CD8-positive, alpha-beta T cell (primary cell): ENCODE measurements at regions of chr12 and their contacts with region 1.

Region 1: DNA sequence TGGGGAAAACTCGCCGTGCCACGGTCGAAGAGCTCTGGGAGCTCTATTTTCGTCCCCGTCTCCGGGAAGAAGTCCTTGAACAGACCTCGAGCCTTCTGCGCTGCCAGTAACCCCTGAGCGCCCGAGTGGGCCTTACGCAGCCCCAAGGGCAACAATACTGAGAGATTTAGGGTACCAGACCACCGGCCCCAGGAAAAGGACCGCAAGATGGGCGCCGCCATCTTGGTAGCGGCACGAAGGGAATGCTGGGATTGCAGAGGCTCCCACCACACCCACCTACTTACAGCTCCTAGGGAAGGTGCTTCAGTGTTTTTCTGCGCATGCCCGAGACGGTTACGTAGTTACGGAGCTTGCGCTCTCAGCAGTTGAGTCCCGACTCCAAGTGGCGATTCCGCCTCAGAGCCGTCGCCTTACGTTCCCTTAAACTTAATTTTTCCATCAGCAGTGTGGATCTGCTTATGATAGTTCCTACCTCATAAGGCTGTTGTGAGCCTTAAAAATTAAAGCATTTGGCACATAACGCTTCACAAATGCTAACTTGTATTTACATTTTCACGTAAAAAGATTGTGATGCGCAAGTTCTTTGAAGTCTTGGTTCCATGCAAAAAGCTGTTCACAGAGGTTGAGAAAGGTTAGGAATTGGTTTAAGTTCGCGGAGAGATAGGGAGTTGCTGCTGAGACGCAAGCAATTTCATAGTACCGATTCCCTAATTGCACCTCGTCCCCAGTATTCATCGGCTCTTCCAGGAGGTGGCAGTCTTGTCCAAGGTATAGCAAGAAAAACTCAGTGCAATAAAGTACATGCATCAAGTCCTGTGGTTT is at the start of gene YARS2:
- DNase-seq: peak; percentile 64 to 97 (median 88)
- ATAC-seq: peak; percentile 87
- H3K4me3 ChIP-seq: peak within 1 kb of the TSS; percentile 80 to 99
- H3K4me3 Mint-ChIP-seq: peak within 1 kb of the TSS; percentile 88
- H3K27ac ChIP-seq: peak within 1 kb of the TSS; percentile 84 to 95
- H3K27ac Mint-ChIP-seq: peak within 1 kb of the TSS; percentile 94
- H3K4me1 ChIP-seq: peaks cover 15% of the 10 kb centered on the region
- H3K4me1 Mint-ChIP-seq: peaks cover 21% of the 10 kb centered on the region
- H3K27me3 ChIP-seq: no peaks in the 10 kb centered on the region
- H3K27me3 Mint-ChIP-seq: no peaks in the 10 kb centered on the region
- CTCF ChIP-seq: peak; percentile 94
- total RNA-seq, gene YARS2: 12.9 to 13.3 TPM

Region 2: GRCh38 chr12:31325877-31326631 is 1429.8 kb before region 1 on chr12 and contains the start of gene SINHCAF:
- CTCF ChIA-PET with region 1: no interaction called
- POLR2A ChIA-PET with region 1: interaction called, 6 read pairs
- intact Hi-C with region 1: loop called (anchors 1 to 10 kb)
- DNase-seq: peak; percentile 94 to 99 (median 99)
- ATAC-seq: peak; percentile 55
- H3K4me3 ChIP-seq: peak within 1 kb of the TSS; percentile 81 to 97
- H3K4me3 Mint-ChIP-seq: peak within 1 kb of the TSS; percentile 92
- H3K27ac ChIP-seq: peak within 1 kb of the TSS; percentile 92 to 96
- H3K27ac Mint-ChIP-seq: peak within 1 kb of the TSS; percentile 93
- H3K4me1 ChIP-seq: peaks cover 22% of the 10 kb centered on the region
- H3K4me1 Mint-ChIP-seq: peaks cover 31% of the 10 kb centered on the region
- H3K27me3 ChIP-seq: no peaks in the 10 kb centered on the region
- H3K27me3 Mint-ChIP-seq: no peaks in the 10 kb centered on the region
- CTCF ChIP-seq: no peak
- total RNA-seq, gene SINHCAF: 93.7 to 108 TPM

Region 3: DNA sequence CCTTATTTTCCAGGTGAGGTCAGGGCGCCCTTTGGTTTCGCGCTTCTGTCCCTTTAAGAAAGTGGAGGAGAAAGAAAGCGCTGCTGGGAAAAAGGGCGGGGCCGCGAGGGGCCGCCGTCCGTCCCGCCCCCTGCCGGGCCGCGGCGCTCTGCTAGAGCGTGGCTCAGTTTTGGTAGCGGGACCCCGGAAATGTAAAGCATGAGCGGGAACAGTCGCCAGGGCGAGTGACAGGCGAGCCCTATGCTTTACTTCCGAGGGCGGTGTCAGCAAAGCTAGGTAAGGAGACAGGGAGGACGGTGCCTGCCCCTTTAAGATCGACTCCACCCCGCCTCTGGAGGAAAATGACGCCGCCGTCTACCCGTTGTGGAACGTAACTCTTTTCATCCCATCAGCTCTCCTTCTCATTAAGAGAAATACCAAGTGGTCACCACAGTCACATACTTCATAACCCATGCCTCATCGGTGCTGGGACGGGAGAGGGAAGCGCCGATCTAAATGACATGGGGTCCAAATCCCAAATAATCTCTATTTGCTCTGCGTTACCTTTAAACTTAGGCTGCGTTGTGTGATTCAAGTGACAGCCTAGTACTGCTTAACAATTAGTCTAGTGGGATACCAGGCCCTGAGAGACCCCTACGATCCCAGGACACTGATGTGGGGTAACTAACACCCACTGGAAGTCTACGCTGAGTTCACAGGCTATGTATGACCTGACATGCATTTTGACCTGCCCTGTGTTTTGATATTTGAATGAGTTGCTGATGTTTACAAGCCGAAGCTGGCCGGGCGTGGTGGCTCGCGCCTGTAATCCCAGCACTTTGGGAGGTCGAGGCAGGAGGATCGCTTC is 1096.6 kb before region 1 on chr12 and contains the start of gene ETFBKMT:
- CTCF ChIA-PET with region 1: interaction called, 14 read pairs
- POLR2A ChIA-PET with region 1: no interaction called
- intact Hi-C with region 1: loop called (anchors 1 to 5 kb)
- DNase-seq: peak; percentile 84 to 97 (median 92)
- ATAC-seq: peak; percentile 99
- H3K4me3 ChIP-seq: peak within 1 kb of the TSS; percentile 82 to 87
- H3K4me3 Mint-ChIP-seq: peak within 1 kb of the TSS; percentile 98
- H3K27ac ChIP-seq: peak within 1 kb of the TSS; percentile 89 to 92
- H3K27ac Mint-ChIP-seq: peak within 1 kb of the TSS; percentile 100
- H3K4me1 ChIP-seq: peaks cover 11% of the 10 kb centered on the region
- H3K4me1 Mint-ChIP-seq: peaks cover 14% of the 10 kb centered on the region
- H3K27me3 ChIP-seq: no peaks in the 10 kb centered on the region
- H3K27me3 Mint-ChIP-seq: no peaks in the 10 kb centered on the region
- CTCF ChIP-seq: peak; percentile 22
- total RNA-seq, gene ETFBKMT: 0.41 to 1.0 TPM

Region 4: DNA sequence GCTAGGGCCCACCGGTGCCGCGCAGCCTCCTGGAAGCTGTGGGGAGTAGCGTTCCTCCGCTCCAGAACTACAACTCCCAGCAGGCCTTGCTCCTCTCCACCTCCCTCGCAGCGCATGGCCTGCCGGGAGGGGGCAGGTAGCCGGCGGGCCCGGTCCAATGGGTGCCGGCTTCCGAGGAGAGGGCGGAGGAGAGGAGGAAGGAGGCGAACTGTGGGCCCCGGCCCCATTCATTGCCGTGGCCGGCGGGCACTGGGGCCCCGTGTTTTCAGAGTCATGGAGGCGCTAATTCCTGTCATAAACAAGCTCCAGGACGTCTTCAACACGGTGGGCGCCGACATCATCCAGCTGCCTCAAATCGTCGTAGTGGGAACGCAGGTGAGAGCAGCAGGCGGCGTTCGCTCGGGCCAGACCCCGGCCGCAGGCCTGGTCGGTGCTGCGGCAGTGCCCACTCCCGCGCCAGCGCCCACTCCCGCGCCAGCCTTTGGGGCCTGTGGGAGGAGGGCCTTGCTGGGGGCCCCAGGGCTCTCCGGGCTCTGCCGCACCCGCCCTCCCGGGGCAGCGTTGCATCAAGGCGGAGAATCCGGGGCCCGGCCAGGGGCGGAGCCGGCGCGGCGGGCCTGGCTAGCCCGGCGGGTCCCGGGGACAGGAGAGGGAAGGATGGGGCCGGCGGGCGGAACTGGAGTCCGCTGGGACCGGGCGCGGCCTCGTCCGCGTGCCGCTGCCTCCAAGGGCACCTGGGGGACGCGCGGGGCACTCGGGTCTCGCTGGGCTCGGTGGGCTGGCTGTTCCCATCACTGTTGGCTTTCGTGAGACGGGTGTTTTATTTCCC is 76.6 kb before region 1 on chr12 and contains the start of gene DNM1L:
- CTCF ChIA-PET with region 1: no interaction called
- POLR2A ChIA-PET with region 1: interaction called, 6 read pairs
- intact Hi-C with region 1: loop called (anchors 1 to 2 kb)
- DNase-seq: peak; percentile 85 to 96 (median 93)
- ATAC-seq: peak; percentile 98
- H3K4me3 ChIP-seq: peak within 1 kb of the TSS; percentile 62 to 76
- H3K4me3 Mint-ChIP-seq: peak within 1 kb of the TSS; percentile 94
- H3K27ac ChIP-seq: peak within 1 kb of the TSS; percentile 71 to 87
- H3K27ac Mint-ChIP-seq: peak within 1 kb of the TSS; percentile 90
- H3K4me1 ChIP-seq: peaks cover 11% of the 10 kb centered on the region
- H3K4me1 Mint-ChIP-seq: peaks cover 30% of the 10 kb centered on the region
- H3K27me3 ChIP-seq: no peaks in the 10 kb centered on the region
- H3K27me3 Mint-ChIP-seq: no peaks in the 10 kb centered on the region
- CTCF ChIP-seq: no peak
- total RNA-seq, gene DNM1L: 76.1 to 77.1 TPM

Region 5: DNA sequence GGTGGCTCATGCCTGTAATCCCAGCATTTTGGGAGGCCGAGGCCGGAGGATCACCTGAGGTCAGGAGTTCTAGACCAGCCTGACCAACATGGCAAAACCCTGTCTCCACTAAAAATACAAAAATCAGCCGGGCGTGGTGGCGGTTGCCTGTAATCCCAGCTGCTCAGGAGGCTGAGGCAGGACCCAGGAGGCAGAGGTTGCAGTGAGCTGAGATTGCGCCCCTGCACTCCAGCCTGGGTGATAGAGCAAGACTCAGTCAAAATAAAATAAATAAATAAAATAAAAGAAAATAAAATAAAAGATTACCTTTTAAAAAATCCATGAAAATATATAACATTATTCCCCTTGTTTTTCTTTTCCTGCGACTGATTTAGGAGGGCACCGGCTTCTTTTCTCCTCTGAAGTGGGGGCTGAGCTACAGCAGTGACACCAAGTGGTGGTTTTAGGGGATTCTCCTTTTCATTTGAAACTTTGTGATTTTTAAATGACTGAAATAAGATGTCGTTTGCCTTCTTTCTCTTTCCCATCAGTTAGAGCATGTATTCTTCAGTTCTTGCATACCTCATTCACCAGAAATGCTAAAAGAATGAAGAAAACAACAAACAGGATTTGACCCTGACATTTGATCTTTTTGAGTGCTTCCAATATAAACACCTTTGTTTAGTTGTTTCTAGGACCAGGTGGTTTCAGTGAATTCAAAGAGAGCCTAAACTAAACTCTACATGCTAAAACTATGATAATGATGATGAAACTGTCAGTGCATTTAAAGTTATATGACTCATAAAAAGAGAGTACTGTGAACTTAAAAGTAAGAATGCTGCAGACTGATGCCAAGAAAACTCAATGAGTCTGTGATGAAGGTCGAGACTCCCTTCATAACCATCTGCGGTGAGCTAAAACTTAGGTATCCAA is 163.3 kb after region 1 on chr12:
- CTCF ChIA-PET with region 1: no interaction called
- POLR2A ChIA-PET with region 1: no interaction called
- intact Hi-C with region 1: loop called in 1 of 2 experiments (anchors 2 kb)
- DNase-seq: peak in 2 of 9 experiments; percentile 4 to 10
- ATAC-seq: no peak
- H3K4me3 ChIP-seq: no peak overlapping the region
- H3K4me3 Mint-ChIP-seq: no peak overlapping the region
- H3K27ac ChIP-seq: no peak overlapping the region
- H3K27ac Mint-ChIP-seq: no peak overlapping the region
- H3K4me1 ChIP-seq: no peaks in the 10 kb centered on the region
- H3K4me1 Mint-ChIP-seq: no peaks in the 10 kb centered on the region
- H3K27me3 ChIP-seq: no peaks in the 10 kb centered on the region
- H3K27me3 Mint-ChIP-seq: peaks cover 11% of the 10 kb centered on the region
- CTCF ChIP-seq: no peak

Region 6: DNA sequence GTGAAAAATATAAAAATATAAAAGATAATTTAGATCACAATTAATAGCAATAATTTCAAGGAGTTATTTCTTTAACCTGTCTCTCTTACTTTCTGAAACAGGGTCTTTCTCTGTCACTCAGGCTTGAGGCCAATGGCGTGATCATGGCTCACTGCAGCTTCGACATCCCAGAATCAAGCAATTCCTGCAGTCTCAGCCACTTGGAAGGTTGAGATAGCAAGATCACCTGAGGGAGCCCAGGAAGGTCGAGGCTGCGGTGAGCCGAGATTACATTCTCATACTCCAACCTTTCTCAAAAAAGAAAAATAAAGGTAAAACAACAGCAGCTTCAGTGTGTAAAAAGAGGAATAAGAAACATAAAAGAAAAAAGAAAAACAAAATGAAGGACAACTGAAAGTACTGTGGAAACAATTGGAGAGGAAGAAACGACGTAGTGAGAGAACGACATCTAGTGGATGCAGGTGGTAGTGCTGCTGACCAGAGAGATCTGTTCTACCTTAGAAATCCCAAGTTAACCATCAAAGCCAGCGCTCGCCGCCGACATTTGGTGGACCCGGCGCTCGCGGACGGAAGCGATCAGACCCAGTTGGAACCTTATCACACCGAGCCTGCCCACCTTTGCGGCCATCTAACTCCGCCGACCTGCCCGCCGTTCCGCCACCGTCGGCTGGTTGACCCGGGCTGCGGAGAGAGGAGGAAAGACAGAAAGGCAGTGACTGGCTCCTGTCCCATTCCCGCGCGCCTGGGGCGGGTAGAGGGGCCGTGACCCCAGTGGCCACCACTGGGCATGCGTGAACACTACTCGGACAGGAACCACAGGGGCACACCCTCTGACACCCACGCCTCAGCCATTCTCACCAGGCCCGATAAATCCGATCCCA is 1462.5 kb after region 1 on chr12:
- CTCF ChIA-PET with region 1: interaction called, 3 read pairs
- POLR2A ChIA-PET with region 1: no interaction called
- intact Hi-C with region 1: loop called in 1 of 2 experiments (anchors 1 kb)
- DNase-seq: peak; percentile 41 to 78 (median 62)
- ATAC-seq: peak; percentile 75
- H3K4me3 ChIP-seq: peak overlapping the region; percentile 48 to 56
- H3K4me3 Mint-ChIP-seq: peak overlapping the region; percentile 84
- H3K27ac ChIP-seq: no peak overlapping the region
- H3K27ac Mint-ChIP-seq: peak overlapping the region; percentile 9
- H3K4me1 ChIP-seq: no peaks in the 10 kb centered on the region
- H3K4me1 Mint-ChIP-seq: peaks cover 9% of the 10 kb centered on the region
- H3K27me3 ChIP-seq: peaks cover 0 to 7% of the 10 kb centered on the region in 2 experiments
- H3K27me3 Mint-ChIP-seq: peaks cover 11% of the 10 kb centered on the region
- CTCF ChIP-seq: peak; percentile 93